Calu3 (cell line): ENCODE measurements at regions of chr4 and their contacts with region 1.

Region 1: DNA sequence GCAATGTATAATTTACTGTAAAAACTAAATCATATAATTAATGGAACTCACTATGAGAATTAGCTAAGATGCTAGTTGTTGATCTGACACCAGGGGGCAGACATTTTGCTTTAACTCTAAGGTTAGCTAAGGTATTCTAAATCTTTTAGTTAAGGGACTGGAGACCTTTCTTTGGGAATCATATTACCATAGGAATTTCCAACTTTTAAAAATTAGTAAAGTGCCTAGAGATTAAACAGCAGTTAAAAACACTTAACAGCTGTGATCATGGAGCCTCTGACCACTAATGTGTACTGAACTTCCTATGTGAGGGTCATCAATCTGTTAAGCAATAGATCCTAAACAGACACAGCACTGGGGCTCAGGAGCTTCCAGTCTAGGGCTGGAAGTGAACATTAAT is 226.6 kb downstream of the NSUN7 start:
- DNase-seq: peak; percentile 56
- H3K4me3 Mint-ChIP-seq: no peak overlapping the region
- H3K27ac Mint-ChIP-seq: no peak overlapping the region
- H3K4me1 Mint-ChIP-seq: no peaks in the 10 kb centered on the region
- H3K27me3 Mint-ChIP-seq: no peaks in the 10 kb centered on the region
- CTCF ChIP-seq: peak; percentile 31

Region 2: GRCh38 chr4:39114436-39114835 is 1861.9 kb before region 1 on chr4:
- CTCF ChIA-PET with region 1: no interaction called
- intact Hi-C with region 1: no loop called
- DNase-seq: no peak
- H3K4me3 Mint-ChIP-seq: no peak overlapping the region
- H3K27ac Mint-ChIP-seq: no peak overlapping the region
- H3K4me1 Mint-ChIP-seq: no peaks in the 10 kb centered on the region
- H3K27me3 Mint-ChIP-seq: no peaks in the 10 kb centered on the region
- CTCF ChIP-seq: no peak

Region 3: DNA sequence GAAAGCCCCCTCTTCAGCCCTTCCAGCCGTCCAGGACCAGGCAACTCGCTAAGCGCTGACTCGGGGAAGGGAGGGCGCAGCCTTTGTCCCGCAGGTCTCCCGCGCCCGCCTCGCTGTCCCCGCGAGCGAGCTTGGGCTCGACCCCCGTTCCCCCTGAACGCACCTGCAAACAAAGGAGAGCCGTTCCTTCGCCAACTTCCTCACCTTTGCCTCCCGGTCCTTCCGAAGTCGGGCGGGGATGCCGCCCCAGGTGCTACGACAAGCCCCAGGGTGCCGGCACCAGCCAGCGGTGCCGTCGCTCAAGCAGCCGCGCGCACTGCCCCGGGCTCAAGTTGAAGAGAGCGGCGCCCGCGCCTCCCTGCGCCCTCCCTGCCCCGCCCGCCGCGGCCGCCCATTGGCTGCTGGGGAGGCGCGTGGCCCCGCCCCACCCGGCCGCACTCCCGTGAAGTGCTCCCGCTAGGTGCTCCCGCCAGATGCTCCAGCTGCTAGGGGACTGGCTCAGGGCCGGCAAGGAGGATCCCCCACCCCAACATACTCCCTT is 119.5 kb before region 1 on chr4:
- CTCF ChIA-PET with region 1: no interaction called
- intact Hi-C with region 1: no loop called
- DNase-seq: peak; percentile 75
- H3K4me3 Mint-ChIP-seq: peak overlapping the region; percentile 87
- H3K27ac Mint-ChIP-seq: no peak overlapping the region
- H3K4me1 Mint-ChIP-seq: no peaks in the 10 kb centered on the region
- H3K27me3 Mint-ChIP-seq: no peaks in the 10 kb centered on the region
- CTCF ChIP-seq: no peak

Region 4: DNA sequence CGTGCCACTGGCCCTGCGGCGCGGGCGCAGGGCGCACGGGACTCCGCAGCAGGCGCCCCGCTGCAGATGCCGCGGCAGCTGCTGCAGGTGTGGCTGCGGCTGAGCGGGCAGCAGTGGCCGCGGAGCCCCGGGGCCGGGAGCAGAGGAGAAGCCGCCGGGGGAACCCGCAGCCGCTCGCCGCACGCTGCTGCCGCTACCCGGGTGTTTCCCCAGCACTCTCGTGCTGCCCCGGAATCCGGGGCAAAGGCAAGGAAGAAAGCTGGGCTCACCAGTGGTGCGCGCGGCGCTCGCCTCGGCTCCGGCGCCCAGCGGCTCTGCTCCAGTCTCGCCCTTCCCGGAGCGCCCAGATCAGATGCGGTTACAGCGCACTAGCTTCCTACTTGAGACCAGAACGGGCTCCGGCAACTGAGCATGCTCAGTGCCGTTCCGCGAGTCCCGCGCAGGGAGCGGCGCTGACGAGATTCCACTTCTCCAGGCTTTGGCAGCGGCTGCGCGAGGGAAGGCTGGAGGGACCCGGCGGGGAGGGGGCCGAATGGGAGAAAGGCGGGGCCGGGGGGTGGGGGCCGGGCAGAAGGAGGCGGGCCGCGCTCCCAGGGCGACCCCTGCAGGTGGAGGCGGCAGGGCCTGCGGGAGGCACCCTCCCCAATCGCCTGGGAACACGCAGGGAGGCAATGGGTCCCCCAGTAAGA is 237.9 kb after region 1 on chr4 and contains the start of gene APBB2:
- CTCF ChIA-PET with region 1: interaction called, 28 read pairs
- intact Hi-C with region 1: loop called (anchors 1 kb)
- DNase-seq: peak; percentile 91
- H3K4me3 Mint-ChIP-seq: peak within 1 kb of the TSS; percentile 71
- H3K27ac Mint-ChIP-seq: peak within 1 kb of the TSS; percentile 97
- H3K4me1 Mint-ChIP-seq: peaks cover under 1% of the 10 kb centered on the region
- H3K27me3 Mint-ChIP-seq: no peaks in the 10 kb centered on the region
- CTCF ChIP-seq: peak; percentile 44
- total RNA-seq, gene APBB2: 15.5 and 17.7 TPM in 2 replicates